Heart right ventricle (tissue), 16 donors: ENCODE measurements at regions of chr3 and their contacts with region 1.

Region 1: DNA sequence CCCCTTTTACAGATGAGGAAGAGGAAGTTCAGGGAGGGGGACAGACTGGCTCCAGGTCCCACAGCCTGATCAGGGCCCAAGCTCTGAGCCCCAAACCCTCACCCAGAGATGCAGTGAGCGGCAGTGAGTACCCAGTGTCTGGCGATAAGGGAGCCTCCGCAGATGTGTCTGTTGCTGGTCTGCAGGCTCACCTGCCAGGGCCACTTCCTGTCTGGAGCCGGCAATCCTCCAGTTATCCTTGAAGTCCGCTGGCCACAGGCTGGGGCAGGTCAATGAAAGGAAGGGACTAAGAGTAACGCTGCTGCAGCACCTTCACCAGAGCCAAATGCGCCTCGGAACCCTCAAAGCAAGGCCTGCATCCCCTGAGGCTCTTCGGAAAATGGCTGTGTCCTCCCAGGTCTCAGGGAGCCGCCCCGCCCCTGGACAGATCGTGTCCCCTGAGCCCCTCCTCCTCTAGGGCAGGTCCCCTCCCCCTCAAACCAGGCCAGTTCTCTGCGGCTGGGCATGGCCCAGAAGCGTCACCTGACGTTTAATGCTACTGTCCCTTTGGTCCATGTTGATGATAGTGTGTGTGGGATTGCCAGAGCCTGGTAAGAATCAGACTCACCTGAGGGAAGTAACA is 51.5 kb downstream of the MYL3 start:
- DNase-seq: no peak
- ATAC-seq: peak; percentile 12 to 56 (median 38)
- H3K4me3 ChIP-seq: peak overlapping the region in 6 of 10 donors; percentile 12 to 45 (median 32)
- H3K27ac ChIP-seq: no peak overlapping the region
- H3K4me1 ChIP-seq: peaks cover 0 to 39% (median 15%) of the 10 kb centered on the region in 9 donors
- H3K27me3 ChIP-seq: peaks cover 0 to 27% (median 8%) of the 10 kb centered on the region in 7 donors
- CTCF ChIP-seq: no peak

Region 2: GRCh38 chr3:46733026-46733800 is 78.5 kb before region 1 on chr3:
- intact Hi-C with region 1: no loop called
- DNase-seq: peak in 1 of 2 donors; percentile 1
- ATAC-seq: no peak
- H3K4me3 ChIP-seq: no peak overlapping the region
- H3K27ac ChIP-seq: no peak overlapping the region
- H3K4me1 ChIP-seq: no peaks in the 10 kb centered on the region
- H3K27me3 ChIP-seq: peaks cover 0 to 18% (median 5%) of the 10 kb centered on the region in 7 donors
- CTCF ChIP-seq: no peak

Region 3: GRCh38 chr3:46748170-46748569 is 63.6 kb before region 1 on chr3:
- intact Hi-C with region 1: loop called in 1 of 10 experiments (anchors 2 kb)
- DNase-seq: no peak
- ATAC-seq: no peak
- H3K4me3 ChIP-seq: no peak overlapping the region
- H3K27ac ChIP-seq: no peak overlapping the region
- H3K4me1 ChIP-seq: no peaks in the 10 kb centered on the region
- H3K27me3 ChIP-seq: peaks cover 0 to 4% (median 0%) of the 10 kb centered on the region in 7 donors
- CTCF ChIP-seq: no peak

Region 4: DNA sequence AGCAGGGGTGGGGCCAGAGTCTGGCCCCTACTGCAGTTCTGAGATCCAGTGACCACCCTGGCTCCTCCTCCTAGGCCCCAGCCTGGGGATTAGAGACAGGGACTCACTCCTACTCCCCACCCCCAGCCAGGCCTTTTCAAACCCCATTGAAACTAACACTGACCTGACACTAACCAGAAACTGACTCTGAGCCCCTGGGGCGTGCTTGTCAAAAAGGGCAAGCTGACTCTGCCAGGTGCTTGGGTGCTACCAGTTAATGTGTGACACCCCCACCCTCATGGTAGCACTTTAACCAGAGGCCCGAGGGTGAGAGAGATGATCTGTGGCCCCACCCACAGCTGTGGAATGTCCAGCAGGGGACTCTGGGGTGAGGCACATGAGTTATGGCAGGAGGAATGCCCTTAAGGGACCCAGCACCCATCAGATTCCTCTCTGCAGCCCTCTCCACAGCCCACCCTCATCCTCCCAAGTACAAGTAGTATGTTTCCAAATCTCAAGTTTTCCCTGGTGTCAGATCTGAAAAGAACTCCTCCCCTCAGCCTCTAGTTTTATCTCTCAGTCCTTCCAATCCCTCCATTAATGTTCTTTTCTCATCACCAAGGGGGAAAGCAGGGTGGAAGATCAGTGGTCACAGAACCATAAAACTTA is 67.2 kb after region 1 on chr3:
- intact Hi-C with region 1: no loop called
- DNase-seq: no peak
- ATAC-seq: peak in 1 of 8 donors; percentile 33
- H3K4me3 ChIP-seq: no peak overlapping the region
- H3K27ac ChIP-seq: no peak overlapping the region
- H3K4me1 ChIP-seq: peaks cover 9 to 48% (median 24%) of the 10 kb centered on the region in 9 donors
- H3K27me3 ChIP-seq: peaks cover 4 to 41% (median 30%) of the 10 kb centered on the region in 7 donors
- CTCF ChIP-seq: no peak